ENCODE measurements at regions of chr16 and their contacts with region 1.

Region 1: DNA sequence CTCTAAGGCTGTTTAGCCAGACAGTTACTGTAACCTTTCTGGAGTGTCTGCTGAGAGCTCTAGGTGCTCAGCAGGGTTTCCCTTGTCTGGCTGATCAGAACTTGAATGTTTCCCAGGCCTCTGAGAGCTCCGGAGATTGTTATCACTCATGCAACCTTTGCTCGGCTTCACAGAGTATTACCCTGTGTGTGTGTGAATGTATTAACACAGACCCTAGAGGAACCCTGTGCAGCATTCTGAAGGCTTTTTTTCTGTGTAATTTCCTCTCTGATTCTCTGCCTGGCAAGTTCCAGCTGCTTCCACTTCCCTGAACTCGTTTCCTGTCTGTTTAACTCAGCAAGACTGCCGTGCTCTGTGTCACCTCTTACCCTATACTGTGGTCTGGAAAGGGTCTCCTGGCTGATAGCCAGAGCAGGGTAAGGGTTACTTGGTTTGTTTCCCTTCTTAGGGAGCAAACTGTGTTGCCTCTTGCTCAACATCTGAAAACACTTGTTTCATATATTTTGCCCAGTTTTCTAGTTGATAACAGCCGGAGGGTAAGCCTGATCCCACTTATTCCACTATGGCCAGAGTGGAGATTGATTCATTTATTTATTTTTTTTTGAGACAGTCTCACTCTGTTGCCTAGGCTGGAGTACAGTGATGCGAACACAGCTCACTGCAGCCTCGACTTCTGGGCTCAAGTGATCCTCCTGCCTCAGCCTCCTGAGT is 21.7 kb downstream of the PRMT7 start:
- DNase-seq: peak; percentile 33
- H3K4me3 ChIP-seq: no peak overlapping the region
- CTCF ChIP-seq: no peak

Region 2: GRCh38 chr16:68244903-68245853 is 87.4 kb before region 1 on chr16 and contains the start of gene PLA2G15:
- in situ Hi-C with region 1: loop called (anchors 5 kb)
- DNase-seq: peak; percentile 89
- H3K4me3 ChIP-seq: peak within 1 kb of the TSS; percentile 97
- CTCF ChIP-seq: no peak

Measured in astrocyte of the cerebellum (primary cell).